HCT116 (cell line): ENCODE measurements at regions of chr5 and their contacts with region 1.

Region 1: DNA sequence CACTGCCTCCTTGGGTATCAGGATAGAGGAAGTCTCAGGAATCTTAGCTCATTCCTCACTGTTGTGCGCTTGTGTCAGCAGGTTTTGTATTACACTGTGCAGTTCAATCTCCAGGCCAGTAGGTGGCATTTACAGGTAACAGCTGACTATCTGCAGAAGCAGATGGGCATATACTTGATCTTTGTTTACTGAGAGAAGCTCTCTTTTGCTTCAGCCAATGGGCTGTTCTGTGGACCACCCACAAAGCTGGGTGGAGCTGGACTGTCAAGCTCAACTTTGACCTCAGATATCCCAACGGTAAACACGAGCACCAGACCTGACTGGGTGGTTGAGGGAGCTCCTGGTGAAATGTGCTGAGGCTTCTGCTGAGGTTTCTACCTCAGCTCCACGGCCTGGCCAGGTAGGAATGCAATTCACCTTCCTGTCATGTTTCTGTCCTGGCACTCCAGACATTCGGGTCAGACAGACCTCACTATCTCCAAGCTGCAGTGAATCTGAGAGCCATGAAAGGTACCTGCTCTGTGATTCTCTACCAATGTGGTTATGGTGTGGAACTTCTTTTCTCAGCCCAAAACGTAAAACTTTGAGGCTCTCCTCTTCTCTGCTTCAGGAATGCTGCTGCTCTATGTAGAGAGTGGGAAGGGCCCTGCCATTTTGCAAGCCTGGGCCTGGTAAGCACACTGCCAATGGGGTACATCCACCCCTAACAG is 167.9 kb upstream of the ACTBL2 start:
- DNase-seq: peak; percentile 57
- ATAC-seq: peak; percentile 97
- H3K4me3 ChIP-seq: no peak overlapping the region
- H3K27ac ChIP-seq: no peak overlapping the region
- H3K4me1 ChIP-seq: peaks cover 0 to 10% of the 10 kb centered on the region in 2 experiments; a peak in 2 of 4 replicates
- H3K27me3 ChIP-seq: no peaks in the 10 kb centered on the region
- CTCF ChIP-seq: peak; percentile 44 to 82 (median 81); a peak in 5 of 6 replicates
- POLR2A ChIP-seq: no peak
- RAD21 ChIP-seq: peak; percentile 80

Region 2: DNA sequence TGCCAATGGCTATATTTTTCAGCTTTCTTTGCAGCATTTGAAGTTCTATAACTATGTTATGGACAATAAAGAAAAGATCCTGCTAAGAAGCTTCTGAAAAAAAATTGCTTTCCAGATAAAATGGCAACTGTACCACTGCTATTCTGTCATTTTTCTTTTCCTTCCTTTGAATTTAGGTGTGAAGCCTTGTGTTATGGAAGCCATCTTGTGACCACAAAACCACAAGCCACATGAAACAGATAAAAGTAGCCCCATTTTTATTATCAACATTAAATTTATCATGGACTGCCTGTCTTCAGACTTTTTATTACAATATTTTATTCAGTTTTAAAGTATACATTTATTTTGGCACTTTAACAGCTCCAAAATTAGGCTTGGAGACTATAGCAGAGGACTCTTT is 122.0 kb after region 1 on chr5:
- CTCF ChIA-PET with region 1: interaction called, 11 read pairs
- POLR2A ChIA-PET with region 1: no interaction called
- RAD21 ChIA-PET with region 1: no interaction called
- intact Hi-C with region 1: no loop called
- DNase-seq: no peak
- ATAC-seq: no peak
- H3K4me3 ChIP-seq: no peak overlapping the region
- H3K27ac ChIP-seq: no peak overlapping the region
- H3K4me1 ChIP-seq: no peaks in the 10 kb centered on the region
- H3K27me3 ChIP-seq: no peaks in the 10 kb centered on the region
- CTCF ChIP-seq: no peak
- POLR2A ChIP-seq: no peak
- RAD21 ChIP-seq: no peak

Region 3: GRCh38 chr5:58019614-58020013 is 369.1 kb after region 1 on chr5:
- CTCF ChIA-PET with region 1: no interaction called
- POLR2A ChIA-PET with region 1: no interaction called
- RAD21 ChIA-PET with region 1: no interaction called
- intact Hi-C with region 1: no loop called
- DNase-seq: no peak
- ATAC-seq: no peak
- H3K4me3 ChIP-seq: no peak overlapping the region
- H3K27ac ChIP-seq: no peak overlapping the region
- H3K4me1 ChIP-seq: no peaks in the 10 kb centered on the region
- H3K27me3 ChIP-seq: no peaks in the 10 kb centered on the region
- CTCF ChIP-seq: no peak
- POLR2A ChIP-seq: no peak
- RAD21 ChIP-seq: no peak

Region 4: GRCh38 chr5:58080558-58080957 is 430.0 kb after region 1 on chr5:
- CTCF ChIA-PET with region 1: no interaction called
- POLR2A ChIA-PET with region 1: no interaction called
- RAD21 ChIA-PET with region 1: no interaction called
- intact Hi-C with region 1: loop called (anchors 10 kb)
- DNase-seq: no peak
- ATAC-seq: no peak
- H3K4me3 ChIP-seq: no peak overlapping the region
- H3K27ac ChIP-seq: no peak overlapping the region
- H3K4me1 ChIP-seq: peaks cover under 1 to 4% of the 10 kb centered on the region in 2 experiments; a peak in 3 of 4 replicates
- H3K27me3 ChIP-seq: no peaks in the 10 kb centered on the region
- CTCF ChIP-seq: no peak
- POLR2A ChIP-seq: no peak
- RAD21 ChIP-seq: no peak